ENCODE measurements at regions of chr5 and their contacts with region 1.

Region 1: DNA sequence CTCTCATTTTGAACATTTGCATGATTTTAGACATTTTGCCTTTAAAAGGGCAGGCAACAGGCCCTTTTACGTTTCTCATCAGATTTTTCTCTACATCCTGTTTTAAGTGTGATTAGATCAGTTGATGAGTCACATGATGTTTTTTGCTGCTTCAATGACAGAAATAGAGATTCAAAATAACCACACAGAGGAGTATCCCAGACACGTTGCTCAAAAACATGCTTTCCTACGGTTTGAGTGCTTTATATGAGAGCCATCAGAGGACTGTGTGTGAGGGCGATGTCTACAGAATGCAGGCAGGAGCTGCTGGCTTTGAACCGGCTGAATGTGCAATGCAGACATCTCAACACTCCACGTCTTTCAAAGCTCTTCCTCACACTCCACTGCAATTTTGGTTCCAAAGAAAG is 42.1 kb downstream of the OTULIN start:
- DNase-seq: peak; percentile 13 to 82 (median 49)
- ATAC-seq: peak; percentile 96 to 97 (median 97)
- H3K4me3 ChIP-seq: no peak overlapping the region
- H3K4me3 Mint-ChIP-seq: peak overlapping the region; percentile 69 to 81 (median 76)
- H3K27ac ChIP-seq: peak overlapping the region; percentile 81
- H3K27ac Mint-ChIP-seq: peak overlapping the region; percentile 99 to 100
- H3K4me1 ChIP-seq: peaks cover 39 to 69% of the 10 kb centered on the region in 2 experiments
- H3K4me1 Mint-ChIP-seq: peaks cover 87 to 88% (median 88%) of the 10 kb centered on the region in 3 donors
- H3K27me3 ChIP-seq: no peaks in the 10 kb centered on the region
- H3K27me3 Mint-ChIP-seq: no peaks in the 10 kb centered on the region

Region 2: DNA sequence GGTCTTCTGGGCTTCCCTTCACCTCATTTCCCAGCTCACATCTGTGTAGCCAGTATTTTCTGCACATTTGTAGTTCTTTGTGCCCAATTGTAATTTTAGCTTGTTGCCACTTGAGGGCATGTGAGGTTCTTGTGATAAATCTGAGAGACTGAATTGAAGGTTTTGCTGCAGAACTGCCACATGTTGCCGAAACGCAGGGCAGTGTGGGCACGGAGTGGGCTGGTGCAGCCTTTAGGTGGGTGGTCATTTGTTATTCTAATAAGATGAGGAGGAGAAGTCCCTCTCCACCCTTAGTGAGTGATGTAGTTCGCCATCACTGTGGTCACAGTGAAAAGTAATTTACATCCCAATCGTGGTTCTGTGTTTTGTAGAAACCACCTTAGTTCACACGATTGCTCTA is 20.9 kb before region 1 on chr5:
- CTCF ChIA-PET with region 1: interaction called, 7 to 29 read pairs
- POLR2A ChIA-PET with region 1: interaction called, 3 to 7 read pairs
- DNase-seq: peak in 20 of 35 experiments; percentile 8 to 73 (median 31)
- ATAC-seq: peak; percentile 81 to 85 (median 83)
- H3K4me3 ChIP-seq: no peak overlapping the region
- H3K4me3 Mint-ChIP-seq: peak overlapping the region; percentile 41 to 57 (median 42)
- H3K27ac ChIP-seq: no peak overlapping the region
- H3K27ac Mint-ChIP-seq: peak overlapping the region; percentile 50 to 88
- H3K4me1 ChIP-seq: peaks cover 3 to 8% of the 10 kb centered on the region in 2 experiments
- H3K4me1 Mint-ChIP-seq: peaks cover 12 to 18% (median 14%) of the 10 kb centered on the region in 3 donors
- H3K27me3 ChIP-seq: no peaks in the 10 kb centered on the region
- H3K27me3 Mint-ChIP-seq: no peaks in the 10 kb centered on the region